ENCODE measurements at regions of chrX and their contacts with region 1.

Region 1: DNA sequence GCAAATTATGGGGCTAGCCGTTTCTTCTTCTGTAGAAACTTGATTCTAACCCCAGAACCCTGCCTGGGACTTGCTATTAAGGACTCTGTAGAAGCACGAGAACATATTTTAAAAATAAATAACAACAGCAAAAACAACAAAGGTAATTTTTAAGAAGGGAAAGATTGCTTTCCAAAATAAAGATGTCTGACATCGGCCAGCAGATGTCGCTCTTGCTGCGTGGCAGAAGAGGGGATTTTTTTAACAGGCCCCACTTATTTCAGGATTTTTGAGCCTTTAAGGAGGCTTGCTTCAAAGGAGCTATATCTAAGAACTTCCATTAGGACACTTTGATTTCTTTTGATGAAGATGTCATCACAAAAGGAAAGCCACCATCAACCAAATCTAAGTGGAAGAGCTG is 62.8 kb upstream of the EGFL6 start:
- DNase-seq: peak in 1 of 2 experiments; percentile 20
- H3K4me3 ChIP-seq: no peak overlapping the region
- H3K27ac ChIP-seq: no peak overlapping the region
- H3K4me1 ChIP-seq: no peaks in the 10 kb centered on the region
- H3K27me3 ChIP-seq: no peaks in the 10 kb centered on the region
- CTCF ChIP-seq: peak; percentile 85

Region 2: GRCh38 chrX:13418126-13419097 is 88.2 kb before region 1 on chrX:
- CTCF ChIA-PET with region 1: no interaction called
- POLR2A ChIA-PET with region 1: no interaction called
- intact Hi-C with region 1: no loop called
- DNase-seq: no peak
- H3K4me3 ChIP-seq: no peak overlapping the region
- H3K27ac ChIP-seq: no peak overlapping the region
- H3K4me1 ChIP-seq: peaks cover 9% of the 10 kb centered on the region; the same call in 1 of the 2 replicates
- H3K27me3 ChIP-seq: no peaks in the 10 kb centered on the region
- CTCF ChIP-seq: no peak

Region 3: GRCh38 chrX:13452283-13452682 is 54.3 kb before region 1 on chrX:
- CTCF ChIA-PET with region 1: no interaction called
- POLR2A ChIA-PET with region 1: no interaction called
- intact Hi-C with region 1: no loop called
- DNase-seq: no peak
- H3K4me3 ChIP-seq: no peak overlapping the region
- H3K27ac ChIP-seq: no peak overlapping the region
- H3K4me1 ChIP-seq: no peaks in the 10 kb centered on the region
- H3K27me3 ChIP-seq: no peaks in the 10 kb centered on the region
- CTCF ChIP-seq: no peak

Region 4: DNA sequence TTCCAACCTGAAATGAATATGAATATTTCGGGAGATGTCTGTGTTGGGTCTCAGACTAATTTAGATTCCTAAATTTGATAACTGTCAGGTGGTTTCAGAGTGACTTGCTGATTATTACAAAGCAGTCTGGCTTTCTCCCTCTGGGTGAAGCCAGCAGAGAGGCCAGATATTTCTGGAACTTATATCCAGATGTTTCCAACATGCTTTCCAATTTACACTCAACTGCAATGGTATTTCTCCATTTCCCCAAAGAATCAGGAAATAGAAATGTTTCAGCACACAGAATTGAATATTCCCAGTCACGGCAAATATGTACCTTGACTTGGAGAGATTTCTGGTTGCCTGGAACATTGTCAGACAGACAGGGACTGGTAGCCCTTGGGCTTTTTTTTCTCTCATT is 14.4 kb after region 1 on chrX:
- CTCF ChIA-PET with region 1: no interaction called
- POLR2A ChIA-PET with region 1: no interaction called
- intact Hi-C with region 1: no loop called
- DNase-seq: no peak
- H3K4me3 ChIP-seq: no peak overlapping the region
- H3K27ac ChIP-seq: no peak overlapping the region
- H3K4me1 ChIP-seq: peaks cover 16% of the 10 kb centered on the region
- H3K27me3 ChIP-seq: no peaks in the 10 kb centered on the region
- CTCF ChIP-seq: no peak

Region 5: GRCh38 chrX:13653022-13653693 is 146.6 kb after region 1 on chrX and contains the start of gene TCEANC:
- CTCF ChIA-PET with region 1: no interaction called
- POLR2A ChIA-PET with region 1: no interaction called
- intact Hi-C with region 1: loop called (anchors 2 kb)
- DNase-seq: peak; percentile 94 to 95
- H3K4me3 ChIP-seq: peak within 1 kb of the TSS; percentile 86
- H3K27ac ChIP-seq: peak within 1 kb of the TSS; percentile 97
- H3K4me1 ChIP-seq: peaks cover 19% of the 10 kb centered on the region
- H3K27me3 ChIP-seq: no peaks in the 10 kb centered on the region
- CTCF ChIP-seq: no peak
- total RNA-seq, gene TCEANC: 0.96 and 1.2 TPM in 2 replicates

Region 6: DNA sequence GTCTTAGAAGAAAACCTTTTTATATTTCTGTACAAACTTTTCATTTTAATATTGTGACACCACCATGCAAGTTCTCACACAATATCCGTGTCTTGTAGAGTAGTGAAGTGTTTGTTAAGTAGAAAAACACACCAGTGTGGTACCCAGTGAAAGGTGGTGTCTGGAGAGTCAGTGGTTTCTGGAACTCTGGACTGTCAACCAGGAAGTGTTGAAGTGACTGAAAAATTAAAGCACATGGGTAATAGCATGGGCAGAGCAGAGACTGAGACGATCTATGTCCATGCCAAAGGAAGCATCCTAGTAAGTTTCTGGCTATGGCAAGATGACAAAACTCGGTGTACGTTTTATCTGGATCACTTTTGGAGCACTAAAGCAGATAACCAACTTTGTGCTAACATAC is 204.6 kb after region 1 on chrX:
- CTCF ChIA-PET with region 1: no interaction called
- POLR2A ChIA-PET with region 1: no interaction called
- intact Hi-C with region 1: no loop called
- DNase-seq: no peak
- H3K4me3 ChIP-seq: no peak overlapping the region
- H3K27ac ChIP-seq: no peak overlapping the region
- H3K4me1 ChIP-seq: no peaks in the 10 kb centered on the region
- H3K27me3 ChIP-seq: no peaks in the 10 kb centered on the region
- CTCF ChIP-seq: no peak

Region 7: GRCh38 chrX:13750204-13750603 is 243.6 kb after region 1 on chrX:
- CTCF ChIA-PET with region 1: interaction called, 5 read pairs
- POLR2A ChIA-PET with region 1: no interaction called
- intact Hi-C with region 1: loop called (anchors 5 kb)
- DNase-seq: peak in 1 of 2 experiments; percentile 44
- H3K4me3 ChIP-seq: no peak overlapping the region
- H3K27ac ChIP-seq: no peak overlapping the region
- H3K4me1 ChIP-seq: no peaks in the 10 kb centered on the region
- H3K27me3 ChIP-seq: no peaks in the 10 kb centered on the region
- CTCF ChIP-seq: peak; percentile 68

Measured in PC-9 (cell line).